ENCODE measurements at regions of chr5 and their contacts with region 1.

Region 1: DNA sequence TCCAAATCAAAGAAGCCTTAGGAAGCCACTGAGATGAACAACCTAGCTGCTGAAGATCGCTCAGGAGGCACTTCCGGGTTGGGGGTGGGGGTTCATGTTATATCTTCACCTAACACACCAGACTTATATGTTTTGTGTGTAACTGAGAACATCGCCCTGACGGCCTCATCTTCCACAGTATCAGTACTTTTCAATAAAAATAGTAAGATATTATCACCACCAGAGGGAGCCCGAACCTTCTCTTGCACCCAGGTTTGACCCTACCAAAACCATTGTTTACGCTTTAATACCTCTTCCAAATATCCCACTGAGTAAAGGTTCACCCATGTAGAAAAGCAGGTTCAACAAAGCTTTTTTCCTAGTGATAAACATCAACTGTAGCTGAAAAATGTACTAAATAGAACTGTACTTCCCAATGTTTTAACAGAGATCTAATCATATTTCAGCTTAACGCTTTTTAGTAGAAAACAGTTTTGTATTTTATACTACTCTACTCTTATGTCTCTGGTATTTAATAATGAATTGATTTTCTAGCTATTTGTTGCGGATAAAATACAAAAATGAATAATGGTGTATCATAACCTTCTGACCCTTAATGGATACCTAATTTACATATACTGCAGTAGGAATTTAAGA is 244.0 kb downstream of the EPB41L4A start:
- DNase-seq: peak; percentile 50
- ATAC-seq: peak; percentile 85
- H3K4me3 Mint-ChIP-seq: no peak overlapping the region
- H3K27ac Mint-ChIP-seq: no peak overlapping the region
- H3K4me1 Mint-ChIP-seq: no peaks in the 10 kb centered on the region
- H3K27me3 Mint-ChIP-seq: peaks cover 12% of the 10 kb centered on the region

Region 2: GRCh38 chr5:112077180-112077579 is 97.9 kb before region 1 on chr5:
- CTCF ChIA-PET with region 1: no interaction called
- POLR2A ChIA-PET with region 1: no interaction called
- DNase-seq: no peak
- ATAC-seq: no peak
- H3K4me3 Mint-ChIP-seq: no peak overlapping the region
- H3K27ac Mint-ChIP-seq: no peak overlapping the region
- H3K4me1 Mint-ChIP-seq: no peaks in the 10 kb centered on the region
- H3K27me3 Mint-ChIP-seq: no peaks in the 10 kb centered on the region

Region 3: DNA sequence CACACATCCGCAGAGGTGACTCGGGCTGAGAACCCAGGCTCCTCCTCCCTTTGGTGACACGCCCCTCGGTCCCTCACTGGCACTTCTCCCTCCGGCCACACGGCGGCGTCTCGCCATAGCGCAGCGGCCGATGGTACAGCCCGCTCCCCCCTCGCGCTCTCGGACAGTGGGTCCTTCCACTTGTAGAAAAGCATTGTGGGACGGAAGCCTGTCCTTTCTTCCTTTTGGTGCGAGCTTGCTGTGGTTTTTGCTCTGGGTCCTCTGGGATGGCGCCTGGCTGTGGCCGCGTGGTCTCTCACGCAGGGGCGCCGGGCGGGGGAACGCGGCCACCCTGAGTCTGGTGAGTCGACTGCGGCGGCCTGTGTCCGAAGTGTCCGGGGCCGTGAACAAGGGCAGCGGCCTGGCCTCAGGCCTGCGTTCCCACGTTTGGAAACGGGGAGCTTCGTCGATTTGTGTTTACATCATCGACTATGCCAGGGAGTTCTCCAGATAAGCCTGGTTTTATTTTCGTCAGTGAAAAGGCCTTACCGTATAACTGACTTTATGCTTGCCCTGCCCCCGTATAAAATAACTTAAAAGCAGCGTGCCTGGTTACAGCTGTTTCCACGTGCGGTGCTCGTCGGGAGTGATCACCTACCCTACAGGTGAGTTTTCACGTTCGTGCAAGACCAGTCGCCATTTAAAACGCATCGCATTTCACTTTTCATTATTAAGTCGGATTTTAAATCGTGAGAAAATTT is 14.3 kb before region 1 on chr5:
- CTCF ChIA-PET with region 1: interaction called, 37 read pairs
- POLR2A ChIA-PET with region 1: interaction called, 4 read pairs
- DNase-seq: peak; percentile 93
- ATAC-seq: peak; percentile 93
- H3K4me3 Mint-ChIP-seq: peak overlapping the region; percentile 90
- H3K27ac Mint-ChIP-seq: peak overlapping the region; percentile 83
- H3K4me1 Mint-ChIP-seq: peaks cover 27% of the 10 kb centered on the region
- H3K27me3 Mint-ChIP-seq: no peaks in the 10 kb centered on the region

Region 4: GRCh38 chr5:112200131-112200530 is 25.1 kb after region 1 on chr5:
- CTCF ChIA-PET with region 1: no interaction called
- POLR2A ChIA-PET with region 1: no interaction called
- DNase-seq: no peak
- ATAC-seq: no peak
- H3K4me3 Mint-ChIP-seq: no peak overlapping the region
- H3K27ac Mint-ChIP-seq: no peak overlapping the region
- H3K4me1 Mint-ChIP-seq: no peaks in the 10 kb centered on the region
- H3K27me3 Mint-ChIP-seq: peaks cover 19% of the 10 kb centered on the region

Region 5: GRCh38 chr5:112419986-112420864 is 245.1 kb after region 1 on chr5:
- CTCF ChIA-PET with region 1: interaction called, 20 read pairs
- POLR2A ChIA-PET with region 1: no interaction called
- DNase-seq: peak; percentile 50
- ATAC-seq: peak; percentile 72
- H3K4me3 Mint-ChIP-seq: peak overlapping the region; percentile 41
- H3K27ac Mint-ChIP-seq: no peak overlapping the region
- H3K4me1 Mint-ChIP-seq: peaks cover 19% of the 10 kb centered on the region
- H3K27me3 Mint-ChIP-seq: peaks cover 45% of the 10 kb centered on the region

Measured in activated CD8-positive, alpha-beta T cell treated with anti-CD3 and anti-CD28 coated beads, Interleukin-2, amount 10 ng/mL, durations not matched to agents 7 days and 5 days (primary cell).